H1 (cell line): ENCODE measurements at regions of chr1 and their contacts with region 1.

Region 1: GRCh38 chr1:27603681-27604578 is at the start of gene AHDC1:
- DNase-seq: peak in 1 of 2 experiments; percentile 97
- H3K4me3 ChIP-seq: peak within 1 kb of the TSS; percentile 57 to 82 (median 68)
- H3K27ac ChIP-seq: no peak within 1 kb of the TSS
- H3K4me1 ChIP-seq: peaks cover 30 to 53% (median 40%) of the 10 kb centered on the region in 4 experiments
- H3K27me3 ChIP-seq: no peaks in the 10 kb centered on the region
- CTCF ChIP-seq: no peak; a peak in 1 of 4 replicates
- EP300 ChIP-seq: no peak
- POLR2A ChIP-seq: peak in 1 of 2 experiments; percentile 68; a peak in 2 of 3 replicates
- RAD21 ChIP-seq: no peak; a peak in 1 of 4 replicates
- total RNA-seq, gene AHDC1: 35.1 and 39.4 TPM in 2 replicates

Region 2: DNA sequence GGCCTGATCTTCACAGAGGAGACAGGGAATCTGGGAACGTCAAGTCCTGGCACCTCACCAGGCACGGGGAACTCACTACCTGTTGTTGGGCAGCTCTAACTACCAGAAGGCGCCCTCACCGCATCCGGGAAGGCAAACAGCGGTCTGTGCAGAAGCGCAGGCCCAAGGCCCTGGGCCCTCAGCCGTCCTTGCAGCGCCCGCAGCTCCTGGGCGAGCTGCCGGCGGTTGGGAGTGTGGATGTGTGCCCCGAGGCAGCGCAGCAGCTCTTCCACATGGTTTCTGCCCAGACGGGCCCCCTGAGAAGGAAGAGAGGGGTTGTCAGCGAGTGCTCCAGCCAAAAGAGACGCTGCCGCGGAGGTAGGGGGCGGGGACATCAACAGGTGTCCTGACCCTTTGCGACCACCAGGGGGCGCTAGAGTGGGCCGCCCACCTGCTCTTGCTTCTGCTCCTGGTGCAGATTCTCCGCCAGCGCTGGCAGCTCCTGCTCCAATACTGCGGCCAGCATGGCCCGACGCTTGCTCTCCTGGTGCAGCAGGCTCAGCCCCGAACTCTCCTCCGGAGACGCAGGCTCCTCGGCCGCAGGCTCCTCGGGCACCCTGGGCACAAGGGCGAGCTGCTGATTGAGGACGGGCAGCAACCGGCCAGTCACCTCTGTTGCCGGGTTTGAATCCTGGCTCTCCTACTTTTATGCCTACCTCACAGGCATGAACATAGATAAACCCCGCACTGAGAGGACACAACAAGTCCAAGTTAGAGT is 246.5 kb before region 1 on chr1:
- CTCF ChIA-PET with region 1: interaction called, 10 read pairs
- POLR2A ChIA-PET with region 1: interaction called, 5 read pairs
- DNase-seq: peak; percentile 73 to 94
- H3K4me3 ChIP-seq: peak overlapping the region in 3 of 4 experiments; percentile 13 to 34 (median 28); a peak in 4 of 8 replicates
- H3K27ac ChIP-seq: no peak overlapping the region
- H3K4me1 ChIP-seq: peaks cover 0 to 14% (median 7%) of the 10 kb centered on the region in 4 experiments; a peak in 6 of 7 replicates
- H3K27me3 ChIP-seq: peaks cover 12 to 47% (median 36%) of the 10 kb centered on the region in 4 experiments
- CTCF ChIP-seq: peak in 2 of 3 experiments; percentile 94 to 98; a peak in 3 of 4 replicates
- EP300 ChIP-seq: no peak; a peak in 1 of 3 replicates
- POLR2A ChIP-seq: no peak
- RAD21 ChIP-seq: peak; percentile 60 to 71

Region 3: DNA sequence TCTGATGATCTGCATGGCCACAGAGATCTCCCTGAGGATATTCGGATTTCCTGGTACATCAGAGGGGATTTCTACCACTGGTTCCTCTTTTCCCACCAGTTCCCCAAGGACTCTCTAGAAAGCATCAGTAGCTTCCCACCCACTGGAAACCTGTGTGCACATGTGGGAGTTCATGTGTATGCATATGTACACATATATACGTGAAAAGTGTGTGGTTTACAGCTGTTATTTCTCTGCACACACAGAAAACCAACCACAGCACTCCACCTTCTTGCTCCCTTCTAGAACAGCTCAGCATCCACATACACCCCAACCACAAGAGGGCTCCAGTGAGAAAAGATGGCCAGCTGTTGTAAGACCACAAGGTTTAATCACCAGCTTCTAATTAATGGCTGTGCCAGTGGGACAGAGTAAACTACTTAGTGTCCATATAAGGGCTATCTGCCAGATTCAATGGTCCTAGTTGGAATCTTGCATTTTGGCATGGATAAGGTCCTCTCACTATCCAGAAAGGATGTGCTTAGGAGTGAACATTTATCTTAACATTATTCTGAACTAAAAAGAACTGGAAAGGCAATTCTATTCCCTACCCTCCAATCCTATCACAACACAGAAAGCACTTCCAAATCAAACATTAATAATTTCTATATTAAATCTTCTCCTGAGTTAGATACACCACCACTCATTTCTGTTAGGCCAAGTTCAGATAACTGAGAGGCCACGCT is 187.4 kb before region 1 on chr1:
- CTCF ChIA-PET with region 1: interaction called, 84 read pairs
- POLR2A ChIA-PET with region 1: interaction called, 3 read pairs
- DNase-seq: no peak
- H3K4me3 ChIP-seq: no peak overlapping the region
- H3K27ac ChIP-seq: no peak overlapping the region
- H3K4me1 ChIP-seq: peaks cover 5 to 12% (median 9%) of the 10 kb centered on the region in 4 experiments; a peak in 6 of 7 replicates
- H3K27me3 ChIP-seq: no peaks in the 10 kb centered on the region
- CTCF ChIP-seq: peak; percentile 46 to 90 (median 79)
- EP300 ChIP-seq: no peak
- POLR2A ChIP-seq: no peak
- RAD21 ChIP-seq: peak; percentile 70 to 80

Region 4: GRCh38 chr1:27513958-27514357 is 90.0 kb before region 1 on chr1:
- CTCF ChIA-PET with region 1: interaction called, 13 read pairs
- POLR2A ChIA-PET with region 1: no interaction called
- DNase-seq: no peak
- H3K4me3 ChIP-seq: no peak overlapping the region
- H3K27ac ChIP-seq: no peak overlapping the region
- H3K4me1 ChIP-seq: peaks cover 0 to 11% (median 5%) of the 10 kb centered on the region in 4 experiments; a peak in 6 of 7 replicates
- H3K27me3 ChIP-seq: no peaks in the 10 kb centered on the region
- CTCF ChIP-seq: no peak
- EP300 ChIP-seq: no peak
- POLR2A ChIP-seq: no peak
- RAD21 ChIP-seq: no peak

Region 5: DNA sequence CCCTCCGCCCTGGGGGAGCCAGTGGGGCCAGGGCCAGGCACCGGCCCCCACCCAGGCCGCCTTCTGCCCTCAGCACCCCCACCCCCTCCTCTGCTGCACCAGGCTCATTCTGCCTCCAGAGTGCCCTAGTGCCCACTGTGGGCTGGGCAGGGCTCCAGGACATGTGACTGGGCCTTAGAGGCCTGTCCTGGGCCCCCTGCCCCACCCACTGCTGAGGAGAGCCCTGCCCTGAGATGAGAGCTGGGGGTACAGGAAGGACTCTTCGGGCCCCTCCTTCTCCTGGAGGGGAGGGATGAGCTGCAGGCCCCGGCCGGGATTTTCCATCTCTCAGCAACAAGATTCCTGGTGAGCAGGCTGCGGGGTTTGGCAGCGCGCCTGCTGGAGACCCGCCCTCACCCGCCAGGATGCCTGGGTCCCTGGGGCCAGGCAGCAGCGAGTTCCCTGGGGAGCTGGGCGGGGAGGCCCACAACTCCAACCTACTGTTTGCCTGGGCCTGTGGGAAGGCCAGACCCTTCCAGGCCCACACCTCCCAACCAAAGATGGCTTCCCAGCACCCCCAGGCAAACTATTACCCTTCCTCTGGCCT is 14.0 kb before region 1 on chr1:
- CTCF ChIA-PET with region 1: interaction called, 1,807 read pairs
- POLR2A ChIA-PET with region 1: interaction called, 355 read pairs
- DNase-seq: no peak
- H3K4me3 ChIP-seq: no peak overlapping the region
- H3K27ac ChIP-seq: no peak overlapping the region
- H3K4me1 ChIP-seq: peaks cover 7 to 45% (median 33%) of the 10 kb centered on the region in 4 experiments
- H3K27me3 ChIP-seq: peaks cover 0 to 2% (median 0%) of the 10 kb centered on the region in 4 experiments; a peak in 1 of 7 replicates
- CTCF ChIP-seq: no peak
- EP300 ChIP-seq: no peak
- POLR2A ChIP-seq: no peak
- RAD21 ChIP-seq: no peak

Region 6: DNA sequence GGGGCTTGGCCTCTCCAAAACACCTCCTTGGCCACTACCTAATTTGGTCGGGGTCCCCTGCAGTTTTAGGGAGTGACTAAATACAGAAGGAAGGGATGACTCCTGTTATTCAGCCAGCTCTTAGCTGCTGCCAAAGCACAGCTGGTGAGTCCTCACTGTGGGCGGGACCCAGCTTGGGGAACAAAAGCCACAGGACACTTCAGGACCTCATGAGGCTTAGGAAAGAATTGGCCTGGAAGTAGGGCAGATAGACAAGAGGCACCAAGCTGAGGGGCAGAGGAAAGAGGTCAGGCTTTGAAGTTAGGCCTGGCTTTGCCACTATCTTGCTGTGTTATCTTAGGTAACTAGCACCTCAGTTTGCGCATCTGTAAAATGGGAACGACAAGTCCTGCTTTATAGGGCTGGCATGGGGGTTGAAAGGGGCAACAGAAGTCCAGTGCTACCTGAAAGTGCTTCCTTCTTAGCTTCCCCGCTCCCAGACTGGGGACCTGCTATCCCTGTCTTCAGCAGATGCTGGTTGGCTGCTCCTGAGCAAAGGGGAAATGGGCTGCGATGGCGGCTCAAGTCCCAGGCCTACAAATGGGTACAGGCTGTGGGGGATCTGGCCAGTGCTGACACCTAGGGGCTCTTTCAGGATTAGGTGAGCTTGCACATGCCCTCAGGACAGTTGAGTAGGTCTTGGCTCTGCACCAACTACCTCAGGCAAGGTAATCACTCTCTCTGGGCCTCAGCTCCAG is 52.4 kb after region 1 on chr1:
- CTCF ChIA-PET with region 1: interaction called, 472 read pairs
- POLR2A ChIA-PET with region 1: interaction called, 5 read pairs
- DNase-seq: peak; percentile 74 to 77
- H3K4me3 ChIP-seq: no peak overlapping the region
- H3K27ac ChIP-seq: no peak overlapping the region
- H3K4me1 ChIP-seq: peaks cover 6 to 21% (median 17%) of the 10 kb centered on the region in 4 experiments
- H3K27me3 ChIP-seq: peaks cover 0 to 2% (median 0%) of the 10 kb centered on the region in 4 experiments; a peak in 2 of 7 replicates
- CTCF ChIP-seq: peak in 2 of 3 experiments; percentile 21 to 41; a peak in 3 of 4 replicates
- EP300 ChIP-seq: peak in 1 of 2 experiments; percentile 76; a peak in 1 of 3 replicates
- POLR2A ChIP-seq: no peak
- RAD21 ChIP-seq: peak in 1 of 2 experiments; percentile 39; a peak in 2 of 4 replicates

Region 7: GRCh38 chr1:27736252-27736651 is 132.3 kb after region 1 on chr1:
- CTCF ChIA-PET with region 1: no interaction called
- POLR2A ChIA-PET with region 1: no interaction called
- DNase-seq: no peak
- H3K4me3 ChIP-seq: no peak overlapping the region
- H3K27ac ChIP-seq: no peak overlapping the region
- H3K4me1 ChIP-seq: no peaks in the 10 kb centered on the region
- H3K27me3 ChIP-seq: no peaks in the 10 kb centered on the region
- CTCF ChIP-seq: no peak
- EP300 ChIP-seq: no peak
- POLR2A ChIP-seq: no peak
- RAD21 ChIP-seq: no peak

Region 8: GRCh38 chr1:27849951-27850350 is 246.0 kb after region 1 on chr1:
- CTCF ChIA-PET with region 1: no interaction called
- POLR2A ChIA-PET with region 1: no interaction called
- DNase-seq: no peak
- H3K4me3 ChIP-seq: no peak overlapping the region
- H3K27ac ChIP-seq: no peak overlapping the region
- H3K4me1 ChIP-seq: no peaks in the 10 kb centered on the region
- H3K27me3 ChIP-seq: no peaks in the 10 kb centered on the region
- CTCF ChIP-seq: no peak
- EP300 ChIP-seq: no peak
- POLR2A ChIP-seq: no peak
- RAD21 ChIP-seq: no peak